ENCODE measurements at regions of chr7 and their contacts with region 1.

Region 1: DNA sequence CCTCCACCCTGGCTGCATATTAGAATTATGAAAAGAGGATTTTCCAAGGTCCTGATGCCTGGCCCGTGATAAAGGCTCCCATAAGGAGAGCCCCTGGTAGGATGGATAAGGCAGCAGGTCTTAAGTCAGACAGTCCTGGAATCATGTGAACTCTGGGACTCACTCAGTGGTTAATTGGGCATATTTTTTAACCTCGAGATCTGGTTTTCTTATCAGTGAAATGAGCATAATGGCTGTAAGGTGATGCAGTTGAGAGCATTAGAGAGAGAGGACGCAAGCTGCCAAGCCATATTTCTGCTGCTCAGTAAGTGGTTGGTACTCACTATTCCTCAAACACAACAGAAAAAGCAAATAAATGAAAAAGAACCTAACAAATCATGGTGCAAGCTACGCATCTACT is 37.8 kb downstream of the TARP start:
- DNase-seq: no peak

Region 2: GRCh38 chr7:36439624-36440023 is 1796.0 kb before region 1 on chr7:
- intact Hi-C with region 1: loop called in 1 of 2 experiments (anchors 5 kb)
- DNase-seq: no peak

Region 3: GRCh38 chr7:38248069-38248567 is 12.5 kb after region 1 on chr7:
- intact Hi-C with region 1: no loop called
- DNase-seq: no peak

Measured in posterior vena cava (tissue), 2 donors.